ENCODE measurements at regions of chr5 and their contacts with region 1.

Region 1: DNA sequence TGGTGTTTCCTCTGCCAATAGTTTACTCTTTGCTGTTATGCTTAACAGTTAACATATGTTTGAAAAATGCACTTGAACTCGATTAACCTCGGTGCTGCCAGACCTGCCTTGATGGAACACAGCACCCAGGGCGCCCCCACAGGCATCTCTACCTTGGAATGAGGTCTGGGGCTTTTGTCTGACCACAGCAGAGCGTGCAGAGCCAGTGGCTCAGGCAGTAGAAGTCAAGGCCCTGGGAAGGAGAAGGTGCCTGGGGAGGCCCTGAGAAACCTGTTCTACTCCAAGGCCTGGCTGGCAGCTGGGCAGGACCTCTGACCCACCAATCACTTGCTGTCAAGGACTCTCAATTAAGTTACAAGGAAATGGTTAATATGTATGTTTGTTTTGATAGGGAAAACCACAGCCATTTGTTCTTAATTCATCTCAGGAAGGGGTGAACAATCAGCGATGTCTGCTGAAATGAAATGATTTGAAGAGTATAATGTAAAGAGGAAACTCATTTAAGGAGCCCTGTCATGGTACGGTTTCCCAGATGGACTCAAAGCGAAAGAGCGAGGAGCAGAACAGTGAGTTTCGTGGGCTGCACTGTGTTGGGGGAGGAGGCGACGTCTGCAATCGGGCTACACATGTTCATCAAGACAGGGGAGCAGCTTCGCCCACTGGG is 21.9 kb downstream of the MACROH2A1 start:
- DNase-seq: peak; percentile 79 to 95 (median 93)
- H3K4me3 ChIP-seq: peak overlapping the region in 5 of 7 experiments; percentile 13 to 64 (median 51)
- H3K27ac ChIP-seq: peak overlapping the region; percentile 22 to 77
- H3K4me1 ChIP-seq: peaks cover 48 to 98% (median 95%) of the 10 kb centered on the region in 4 experiments
- H3K27me3 ChIP-seq: no peaks in the 10 kb centered on the region

Region 2: GRCh38 chr5:135356522-135357318 is 20.4 kb before region 1 on chr5:
- CTCF ChIA-PET with region 1: interaction called, 15 read pairs
- POLR2A ChIA-PET with region 1: interaction called, 10 read pairs
- DNase-seq: no peak
- H3K4me3 ChIP-seq: peak overlapping the region in 2 of 7 experiments; percentile 15 to 17
- H3K27ac ChIP-seq: peak overlapping the region in 1 of 2 experiments; percentile 46
- H3K4me1 ChIP-seq: peaks cover 13 to 92% (median 67%) of the 10 kb centered on the region in 4 experiments
- H3K27me3 ChIP-seq: no peaks in the 10 kb centered on the region

Region 3: GRCh38 chr5:135392256-135392655 is 15.2 kb after region 1 on chr5:
- CTCF ChIA-PET with region 1: interaction called, 52 read pairs
- POLR2A ChIA-PET with region 1: interaction called, 9 read pairs
- DNase-seq: peak in 2 of 3 donors; percentile 61 to 69
- H3K4me3 ChIP-seq: peak overlapping the region in 2 of 7 experiments; percentile 19 to 43
- H3K27ac ChIP-seq: peak overlapping the region in 1 of 2 experiments; percentile 65
- H3K4me1 ChIP-seq: peaks cover 32 to 100% (median 88%) of the 10 kb centered on the region in 4 experiments
- H3K27me3 ChIP-seq: no peaks in the 10 kb centered on the region

Region 4: GRCh38 chr5:135398853-135399523 is 21.9 kb after region 1 on chr5 and contains the start of gene MACROH2A1:
- CTCF ChIA-PET with region 1: interaction called, 52 read pairs
- POLR2A ChIA-PET with region 1: interaction called, 12 read pairs
- DNase-seq: peak; percentile 78 to 86 (median 79)
- H3K4me3 ChIP-seq: peak within 1 kb of the TSS; percentile 66 to 93 (median 86)
- H3K27ac ChIP-seq: peak within 1 kb of the TSS; percentile 95 to 97
- H3K4me1 ChIP-seq: peaks cover 28 to 74% (median 61%) of the 10 kb centered on the region in 4 experiments
- H3K27me3 ChIP-seq: no peaks in the 10 kb centered on the region

Region 5: GRCh38 chr5:135628771-135629563 is 251.9 kb after region 1 on chr5:
- CTCF ChIA-PET with region 1: no interaction called
- POLR2A ChIA-PET with region 1: no interaction called
- DNase-seq: no peak
- H3K4me3 ChIP-seq: no peak overlapping the region
- H3K27ac ChIP-seq: no peak overlapping the region
- H3K4me1 ChIP-seq: no peaks in the 10 kb centered on the region
- H3K27me3 ChIP-seq: peaks cover 0 to 7% (median 0%) of the 10 kb centered on the region in 5 experiments

Measured in common myeloid progenitor, CD34-positive (primary cell).